Natural killer cell (primary cell): ENCODE measurements at regions of chr10 and their contacts with region 1.

Region 1: DNA sequence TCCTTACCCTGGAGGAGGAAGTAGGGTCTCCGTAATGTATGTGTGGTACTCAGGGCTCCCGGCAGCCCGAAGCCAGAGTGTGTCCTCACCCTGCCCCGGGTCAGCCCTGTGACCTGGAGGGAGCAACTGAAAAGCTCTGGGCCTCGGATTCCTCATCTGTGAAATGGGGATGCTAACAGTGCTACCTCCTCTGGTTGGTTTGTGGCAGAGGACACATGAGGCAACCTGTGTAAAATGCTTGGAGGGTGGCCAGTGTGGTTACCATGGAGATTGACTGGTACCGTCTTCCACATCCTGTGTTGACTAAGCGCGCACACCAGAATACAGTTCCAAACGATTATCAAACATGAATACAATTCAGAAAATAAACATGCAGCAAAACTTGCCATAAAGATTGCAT is 163.8 kb upstream of the KLF6 start:
- DNase-seq: peak; percentile 60 to 91
- ATAC-seq: peak; percentile 75 to 85 (median 85)
- H3K4me3 ChIP-seq: no peak overlapping the region
- H3K4me3 Mint-ChIP-seq: peak overlapping the region; percentile 81
- H3K27ac ChIP-seq: peak overlapping the region; percentile 63
- H3K27ac Mint-ChIP-seq: peak overlapping the region; percentile 83 to 85
- H3K4me1 ChIP-seq: peaks cover 52% of the 10 kb centered on the region
- H3K4me1 Mint-ChIP-seq: peaks cover 61 to 64% of the 10 kb centered on the region in 2 donors
- H3K27me3 ChIP-seq: no peaks in the 10 kb centered on the region
- H3K27me3 Mint-ChIP-seq: no peaks in the 10 kb centered on the region
- CTCF ChIP-seq: no peak

Region 2: DNA sequence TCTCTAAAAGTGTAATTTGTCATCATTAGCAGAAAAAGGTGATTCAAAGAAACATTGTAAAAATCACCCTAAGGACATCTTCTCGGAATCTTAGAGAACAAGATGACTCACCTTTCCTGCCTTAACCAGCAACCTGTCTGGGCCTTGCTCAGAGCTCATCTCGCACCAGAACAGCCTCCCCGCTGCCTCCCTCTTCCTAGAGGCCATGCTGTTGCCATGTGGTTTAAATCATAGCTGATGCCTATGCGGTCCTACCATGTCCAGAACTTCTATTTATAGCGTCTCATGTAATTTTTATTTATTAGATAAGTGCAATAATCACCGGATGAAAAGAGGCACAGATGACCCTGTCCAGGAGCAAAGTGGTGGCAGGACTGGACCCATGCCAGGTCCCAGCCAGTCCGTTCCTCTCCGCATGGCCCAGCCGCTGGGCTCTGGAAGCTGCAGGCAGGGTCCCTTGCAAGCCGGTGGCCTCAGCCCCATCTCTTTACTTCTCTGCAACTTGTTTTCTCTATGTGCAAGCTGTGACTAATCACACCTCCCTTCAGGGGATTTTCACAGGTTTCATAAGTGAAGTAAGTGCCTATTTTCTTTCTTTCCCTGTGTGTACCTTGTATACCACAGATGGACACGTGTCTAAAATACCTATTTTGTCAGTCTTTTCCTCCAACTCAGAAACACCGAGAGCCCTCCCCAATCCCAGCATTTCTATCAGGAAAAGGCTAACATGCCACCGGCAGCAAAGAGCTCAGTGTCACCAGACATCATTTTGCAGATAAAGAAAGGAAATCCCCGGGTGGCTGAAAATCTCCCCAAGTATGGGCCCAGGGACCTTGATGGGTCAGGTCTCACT is 191.0 kb before region 1 on chr10:
- intact Hi-C with region 1: loop called (anchors 1 kb)
- DNase-seq: peak in 1 of 2 donors; percentile 80
- ATAC-seq: peak; percentile 84 to 92 (median 89)
- H3K4me3 ChIP-seq: no peak overlapping the region
- H3K4me3 Mint-ChIP-seq: peak overlapping the region; percentile 84
- H3K27ac ChIP-seq: peak overlapping the region; percentile 87
- H3K27ac Mint-ChIP-seq: peak overlapping the region; percentile 91 to 95
- H3K4me1 ChIP-seq: peaks cover 43% of the 10 kb centered on the region
- H3K4me1 Mint-ChIP-seq: peaks cover 26 to 34% of the 10 kb centered on the region in 2 donors
- H3K27me3 ChIP-seq: no peaks in the 10 kb centered on the region
- H3K27me3 Mint-ChIP-seq: no peaks in the 10 kb centered on the region
- CTCF ChIP-seq: no peak

Region 3: DNA sequence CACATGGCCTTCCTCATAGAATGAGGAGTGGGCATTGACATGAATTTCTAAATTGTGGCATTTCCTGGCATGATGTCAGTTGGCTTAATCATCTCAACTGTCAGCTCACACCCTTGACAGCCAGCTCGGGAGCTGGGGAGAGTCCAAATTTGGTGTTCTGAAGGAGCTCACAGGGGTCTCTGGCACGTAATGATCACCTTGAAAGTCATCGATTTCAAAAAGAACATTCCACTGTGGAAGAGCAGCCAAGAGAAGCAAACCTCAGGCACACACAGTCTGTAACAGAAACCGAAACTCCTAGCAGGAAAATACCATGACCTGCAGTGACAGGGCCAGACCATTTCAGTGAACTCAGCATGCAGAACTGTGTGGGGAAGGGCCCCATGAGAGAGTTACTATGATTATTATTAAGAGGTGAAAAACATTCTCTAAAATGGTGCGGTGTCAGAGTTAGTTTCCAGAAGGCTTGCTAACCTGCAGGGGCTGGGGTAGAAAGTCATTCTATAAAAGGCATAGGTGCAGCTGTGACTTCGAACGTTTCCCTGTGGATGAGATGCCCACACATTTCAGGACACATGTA is 137.5 kb before region 1 on chr10:
- intact Hi-C with region 1: loop called (anchors 2 kb)
- DNase-seq: peak; percentile 47 to 76
- ATAC-seq: peak; percentile 37 to 71 (median 56)
- H3K4me3 ChIP-seq: no peak overlapping the region
- H3K4me3 Mint-ChIP-seq: peak overlapping the region; percentile 87
- H3K27ac ChIP-seq: peak overlapping the region; percentile 100
- H3K27ac Mint-ChIP-seq: no peak overlapping the region
- H3K4me1 ChIP-seq: peaks cover 68% of the 10 kb centered on the region
- H3K4me1 Mint-ChIP-seq: peaks cover 66 to 80% of the 10 kb centered on the region in 2 donors
- H3K27me3 ChIP-seq: no peaks in the 10 kb centered on the region
- H3K27me3 Mint-ChIP-seq: no peaks in the 10 kb centered on the region
- CTCF ChIP-seq: no peak

Region 4: DNA sequence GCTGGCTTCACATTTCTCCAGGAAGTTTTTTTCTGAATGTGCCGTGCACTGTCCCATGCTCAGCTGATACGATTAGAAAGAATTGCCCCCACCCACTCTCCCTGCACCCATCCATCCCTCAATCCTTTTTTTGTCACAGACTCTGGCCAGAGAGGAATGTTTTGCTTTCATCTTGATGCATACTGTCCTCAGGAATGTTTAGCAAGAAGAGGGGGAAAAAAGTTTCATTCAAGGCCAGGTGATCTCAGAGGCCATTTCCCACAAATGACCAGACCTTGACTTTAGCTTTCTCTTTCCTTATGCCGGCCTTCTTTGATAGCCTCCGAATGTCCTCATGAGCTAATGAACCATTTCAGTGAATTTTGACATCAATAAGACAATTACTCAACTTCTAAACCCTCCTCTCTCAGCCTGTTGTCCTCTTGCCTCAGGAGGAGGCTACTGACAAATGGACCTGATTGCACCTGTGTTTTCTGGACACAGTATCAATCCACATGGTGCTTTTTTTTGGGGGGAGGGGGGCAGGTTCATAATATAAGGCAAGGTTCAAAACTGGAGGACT is 58.8 kb before region 1 on chr10:
- intact Hi-C with region 1: loop called (anchors 5 kb)
- DNase-seq: no peak
- ATAC-seq: no peak
- H3K4me3 ChIP-seq: no peak overlapping the region
- H3K4me3 Mint-ChIP-seq: no peak overlapping the region
- H3K27ac ChIP-seq: no peak overlapping the region
- H3K27ac Mint-ChIP-seq: peak overlapping the region in 1 of 2 donors; percentile 31
- H3K4me1 ChIP-seq: peaks cover 42% of the 10 kb centered on the region
- H3K4me1 Mint-ChIP-seq: peaks cover 23 to 26% of the 10 kb centered on the region in 2 donors
- H3K27me3 ChIP-seq: no peaks in the 10 kb centered on the region
- H3K27me3 Mint-ChIP-seq: no peaks in the 10 kb centered on the region
- CTCF ChIP-seq: no peak

Region 5: DNA sequence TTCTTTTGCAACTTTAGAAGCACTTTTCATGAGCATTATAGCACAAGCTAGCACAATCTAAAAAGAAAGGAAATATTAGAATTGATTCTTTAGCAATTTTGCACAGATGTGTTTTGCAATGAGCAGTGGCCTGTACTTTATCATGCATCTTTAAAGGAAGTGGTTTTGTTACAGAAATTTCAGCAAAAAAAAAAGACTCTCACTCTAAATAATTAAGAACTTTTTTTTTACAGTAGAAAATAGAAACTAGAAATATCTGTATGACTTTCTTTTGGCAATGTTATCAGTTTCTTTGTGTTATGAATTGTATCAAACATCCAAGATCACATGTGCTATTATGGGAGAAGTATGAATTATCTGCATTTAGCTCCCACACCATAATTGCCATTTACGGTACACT is 31.8 kb after region 1 on chr10:
- intact Hi-C with region 1: loop called (anchors 5 kb)
- DNase-seq: peak in 1 of 2 donors; percentile 30
- ATAC-seq: peak; percentile 52 to 68 (median 54)
- H3K4me3 ChIP-seq: no peak overlapping the region
- H3K4me3 Mint-ChIP-seq: peak overlapping the region; percentile 73
- H3K27ac ChIP-seq: no peak overlapping the region
- H3K27ac Mint-ChIP-seq: peak overlapping the region; percentile 73 to 74
- H3K4me1 ChIP-seq: peaks cover 24% of the 10 kb centered on the region
- H3K4me1 Mint-ChIP-seq: peaks cover 41 to 42% of the 10 kb centered on the region in 2 donors
- H3K27me3 ChIP-seq: no peaks in the 10 kb centered on the region
- H3K27me3 Mint-ChIP-seq: no peaks in the 10 kb centered on the region
- CTCF ChIP-seq: no peak

Region 6: GRCh38 chr10:4006051-4006450 is 57.2 kb after region 1 on chr10:
- intact Hi-C with region 1: no loop called
- DNase-seq: no peak
- ATAC-seq: no peak
- H3K4me3 ChIP-seq: no peak overlapping the region
- H3K4me3 Mint-ChIP-seq: no peak overlapping the region
- H3K27ac ChIP-seq: no peak overlapping the region
- H3K27ac Mint-ChIP-seq: no peak overlapping the region
- H3K4me1 ChIP-seq: no peaks in the 10 kb centered on the region
- H3K4me1 Mint-ChIP-seq: no peaks in the 10 kb centered on the region
- H3K27me3 ChIP-seq: no peaks in the 10 kb centered on the region
- H3K27me3 Mint-ChIP-seq: peaks cover 2 to 5% of the 10 kb centered on the region in 2 donors
- CTCF ChIP-seq: no peak

Region 7: GRCh38 chr10:4234661-4235060 is 285.8 kb after region 1 on chr10:
- intact Hi-C with region 1: loop called (anchors 2 kb)
- DNase-seq: peak; percentile 71 to 81
- ATAC-seq: peak; percentile 94 to 97 (median 96)
- H3K4me3 ChIP-seq: no peak overlapping the region
- H3K4me3 Mint-ChIP-seq: peak overlapping the region; percentile 67
- H3K27ac ChIP-seq: peak overlapping the region; percentile 54
- H3K27ac Mint-ChIP-seq: peak overlapping the region; percentile 83 to 89
- H3K4me1 ChIP-seq: peaks cover 14% of the 10 kb centered on the region
- H3K4me1 Mint-ChIP-seq: peaks cover 25 to 30% of the 10 kb centered on the region in 2 donors
- H3K27me3 ChIP-seq: no peaks in the 10 kb centered on the region
- H3K27me3 Mint-ChIP-seq: peaks cover 0 to 2% of the 10 kb centered on the region in 2 donors
- CTCF ChIP-seq: peak; percentile 58